ENCODE measurements at regions of chr10 and their contacts with region 1.

Region 1: GRCh38 chr10:17617031-17617911 is at the start of gene HACD1:
- DNase-seq: peak; percentile 54 to 93 (median 78)
- ATAC-seq: peak; percentile 79
- H3K4me3 ChIP-seq: peak within 1 kb of the TSS; percentile 67
- H3K27ac ChIP-seq: no peak within 1 kb of the TSS
- H3K4me1 ChIP-seq: peaks cover 4 to 19% of the 10 kb centered on the region in 2 experiments; a peak in 4 of 5 replicates
- H3K27me3 ChIP-seq: no peaks in the 10 kb centered on the region
- CTCF ChIP-seq: peak in 2 of 3 experiments; percentile 2 to 31; a peak in 2 of 6 replicates
- EP300 ChIP-seq: no peak
- POLR2A ChIP-seq: no peak
- RAD21 ChIP-seq: no peak
- polyA plus RNA-seq, gene HACD1: 0.99 to 1.0 TPM

Region 2: DNA sequence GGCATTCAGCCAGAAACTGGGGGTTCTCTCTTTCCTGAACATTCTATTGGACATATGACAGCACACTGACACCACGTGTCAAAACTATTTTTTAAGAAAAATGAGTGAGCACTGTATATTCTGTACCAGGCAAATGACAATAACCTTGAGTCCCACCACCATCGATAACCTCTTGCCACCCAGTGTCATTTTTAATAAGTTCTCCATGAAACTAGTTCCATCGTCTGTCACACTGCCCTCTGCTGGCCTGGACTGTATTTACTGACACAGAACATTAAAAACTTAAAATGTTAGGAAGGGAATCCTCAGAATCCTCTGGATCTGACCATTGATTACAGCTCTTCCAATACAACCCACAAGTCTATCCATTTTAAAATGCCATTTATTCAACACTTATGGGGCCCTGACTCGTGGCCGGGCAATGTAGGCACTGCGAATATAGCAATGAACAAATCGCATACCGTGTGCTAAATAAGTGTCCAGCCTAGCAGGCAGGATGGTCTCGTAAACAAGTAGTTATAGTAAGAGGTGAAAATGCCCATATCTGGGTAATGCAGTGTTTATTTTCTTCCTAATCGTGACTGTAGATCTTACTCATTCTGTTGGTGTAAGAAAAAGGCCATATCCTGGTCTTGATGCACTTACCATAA is 487.1 kb after region 1 on chr10:
- CTCF ChIA-PET with region 1: no interaction called
- POLR2A ChIA-PET with region 1: no interaction called
- in situ Hi-C with region 1: loop called (anchors 25 kb)
- intact Hi-C with region 1: no loop called
- DNase-seq: peak; percentile 20 to 59 (median 30)
- ATAC-seq: peak; percentile 67; the same call in 2 of the 3 replicates
- H3K4me3 ChIP-seq: no peak overlapping the region
- H3K27ac ChIP-seq: no peak overlapping the region
- H3K4me1 ChIP-seq: no peaks in the 10 kb centered on the region
- H3K27me3 ChIP-seq: no peaks in the 10 kb centered on the region
- CTCF ChIP-seq: peak; percentile 56 to 72 (median 65); a peak in 5 of 6 replicates
- EP300 ChIP-seq: no peak
- POLR2A ChIP-seq: no peak
- RAD21 ChIP-seq: peak; percentile 21 to 54; a peak in 3 of 4 replicates

Measured in K562 (cell line).